ENCODE measurements at regions of chr15 and their contacts with region 1.

Region 1: DNA sequence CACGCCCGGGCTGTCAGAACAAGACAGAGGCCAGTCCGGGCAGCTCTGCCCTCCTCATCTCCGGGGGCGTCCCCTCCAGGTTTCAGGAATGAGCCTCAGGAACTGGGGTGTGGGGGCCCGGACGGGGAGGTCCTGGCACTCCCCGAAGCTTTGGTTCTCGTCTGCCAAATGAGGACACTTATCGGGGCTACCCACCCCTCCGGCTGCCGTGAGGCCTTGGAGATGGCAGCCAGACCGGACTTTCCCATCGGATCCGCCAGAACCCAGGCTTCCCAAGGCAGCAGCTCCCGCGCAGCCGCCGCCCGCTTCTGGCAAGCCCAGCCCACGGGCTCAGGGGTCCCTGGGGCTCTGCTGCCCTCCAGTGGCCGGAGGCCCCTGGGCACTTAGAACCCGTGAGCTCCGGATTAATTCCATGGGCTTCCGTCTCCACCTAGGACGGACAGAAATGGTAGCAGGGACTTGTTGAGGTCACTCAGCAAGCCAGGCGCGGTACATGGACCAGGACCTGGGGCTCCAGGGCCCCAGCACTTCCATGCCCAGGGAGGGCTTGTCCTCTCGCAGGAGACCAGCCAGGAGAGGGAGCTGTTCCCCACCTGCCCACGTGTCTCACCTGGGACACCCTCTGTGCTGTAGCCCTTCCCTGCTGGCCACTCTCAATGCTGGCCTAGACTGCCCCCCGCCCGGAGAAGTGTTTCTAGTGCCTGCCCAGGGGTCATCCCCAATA is 89.4 kb downstream of the LINGO1 start:
- DNase-seq: peak; percentile 74 to 92
- ATAC-seq: peak; percentile 82

Region 2: DNA sequence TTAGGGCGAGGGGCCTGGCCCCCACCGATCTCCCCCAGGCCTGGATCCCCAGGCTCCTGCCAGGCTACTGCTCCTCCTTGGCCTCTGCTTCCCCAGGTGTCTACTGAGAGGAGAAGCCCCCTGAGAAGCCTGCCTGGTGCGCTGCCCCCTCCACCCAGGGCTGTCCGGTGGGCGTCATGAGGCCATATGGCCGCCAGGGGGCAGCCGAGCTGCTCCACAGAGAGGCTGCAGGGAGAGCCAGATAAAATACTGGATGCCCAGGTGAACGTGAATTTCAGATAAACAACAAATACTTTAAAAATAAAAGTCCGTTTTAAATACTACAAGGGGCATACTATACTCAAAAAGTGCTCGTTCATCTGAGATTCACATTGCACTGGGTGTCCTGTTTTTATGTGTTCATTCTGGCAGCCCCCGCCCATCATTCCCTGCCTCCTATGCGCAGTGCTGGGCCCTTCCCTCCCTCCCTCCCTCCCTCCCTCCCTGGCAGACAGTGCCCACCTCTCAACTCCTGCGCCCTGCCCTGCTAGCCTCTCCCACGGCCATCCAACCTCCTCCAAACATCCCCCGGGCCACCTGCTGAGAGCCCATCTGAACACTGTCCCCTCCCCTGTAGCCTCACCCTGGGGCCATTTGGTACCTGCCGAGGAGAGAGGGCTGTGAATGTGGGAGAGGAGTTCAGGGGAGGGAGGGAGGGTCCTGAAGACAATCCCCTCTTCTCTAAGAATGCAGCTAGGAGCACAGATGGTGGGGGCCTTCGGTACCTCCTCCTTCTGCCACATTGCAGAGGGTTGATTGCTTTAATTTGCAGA is 518.8 kb before region 1 on chr15:
- intact Hi-C with region 1: loop called in 1 of 2 experiments (anchors 10 kb)
- DNase-seq: peak; percentile 21 to 78
- ATAC-seq: peak; percentile 53

Region 3: GRCh38 chr15:77118882-77119321 is 424.4 kb before region 1 on chr15:
- intact Hi-C with region 1: loop called in 1 of 2 experiments (anchors 5 kb)
- DNase-seq: peak in 1 of 2 donors; percentile 42
- ATAC-seq: peak; percentile 72

Region 4: GRCh38 chr15:77664428-77664827 is 121.1 kb after region 1 on chr15:
- intact Hi-C with region 1: no loop called
- DNase-seq: no peak
- ATAC-seq: no peak

Measured in left colon (tissue), 2 donors.